Dorsolateral prefrontal cortex (tissue), 120 donors: ENCODE measurements at regions of chr7 and their contacts with region 1.

Region 1: GRCh38 chr7:123154231-123154860 is 45.4 kb downstream of the SLC13A1 start:
- DNase-seq: peak in 9 of 10 donors; percentile 53 to 89 (median 70)
- H3K4me3 ChIP-seq: no peak overlapping the region
- H3K27ac ChIP-seq: peak overlapping the region in 1 of 59 donors; percentile 33
- H3K27me3 ChIP-seq: no peaks in the 10 kb centered on the region
- CTCF ChIP-seq: peak; percentile 74 to 95 (median 87)

Region 2: GRCh38 chr7:122225874-122226273 is 928.5 kb before region 1 on chr7:
- intact Hi-C with region 1: loop called in 1 of 2 experiments (anchors 10 kb)
- DNase-seq: no peak
- H3K4me3 ChIP-seq: no peak overlapping the region
- H3K27ac ChIP-seq: no peak overlapping the region
- H3K27me3 ChIP-seq: peaks cover 0 to 14% (median 0%) of the 10 kb centered on the region in 45 donors
- CTCF ChIP-seq: no peak

Region 3: GRCh38 chr7:122803323-122803722 is 351.0 kb before region 1 on chr7:
- intact Hi-C with region 1: loop called (anchors 10 kb)
- DNase-seq: peak in 3 of 10 donors; percentile 28 to 51 (median 30)
- H3K4me3 ChIP-seq: peak overlapping the region in 3 of 59 donors; percentile 2 to 27 (median 4)
- H3K27ac ChIP-seq: peak overlapping the region in 50 of 59 donors; percentile 7 to 84 (median 62)
- H3K27me3 ChIP-seq: no peaks in the 10 kb centered on the region
- CTCF ChIP-seq: peak; percentile 43 to 76 (median 66)

Region 4: DNA sequence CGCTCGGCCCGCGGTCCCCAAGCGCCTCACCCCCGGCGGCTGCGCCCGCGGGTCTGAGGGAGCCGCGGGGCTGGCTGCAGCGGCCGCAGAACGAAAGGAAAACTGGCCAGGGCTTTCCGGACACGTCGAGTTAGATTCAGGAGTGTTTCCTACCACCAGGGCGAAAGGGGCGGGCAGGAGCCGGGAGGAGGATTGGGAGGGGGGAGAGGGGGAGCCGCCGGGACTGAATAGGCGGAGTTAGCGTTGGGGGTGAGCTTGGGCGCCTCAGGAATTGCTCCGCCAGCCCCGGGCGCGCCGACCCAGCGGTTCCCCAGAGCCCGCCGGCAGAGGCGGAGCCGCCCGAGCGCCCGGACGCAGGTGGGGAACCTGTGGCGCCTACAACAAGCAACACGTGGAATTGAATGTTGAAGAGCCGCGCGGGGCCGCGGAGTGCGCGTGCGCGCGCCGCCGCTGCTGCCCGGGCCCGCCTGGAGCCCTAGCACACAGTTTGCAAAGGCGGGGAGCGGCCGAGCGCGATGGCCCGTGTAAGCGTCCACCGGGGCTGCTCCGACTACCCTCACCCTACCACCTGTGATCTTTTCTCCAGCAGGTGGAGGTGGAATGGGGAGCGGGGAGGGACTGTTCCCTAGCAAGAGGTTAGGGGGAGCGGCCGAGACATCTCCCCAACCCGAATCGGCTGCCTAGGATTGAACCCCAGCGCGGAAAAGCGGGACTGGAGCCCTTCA is 267.8 kb before region 1 on chr7 and contains the start of gene CADPS2:
- intact Hi-C with region 1: loop called in 1 of 2 experiments (anchors 5 kb)
- DNase-seq: peak; percentile 40 to 80 (median 67)
- H3K4me3 ChIP-seq: peak within 1 kb of the TSS; percentile 53 to 94 (median 80)
- H3K27ac ChIP-seq: peak within 1 kb of the TSS in 58 of 59 donors; percentile 14 to 95 (median 84)
- H3K27me3 ChIP-seq: no peaks in the 10 kb centered on the region
- CTCF ChIP-seq: peak in 14 of 56 donors; percentile 9 to 28 (median 15)
- total RNA-seq, gene CADPS2: 30.5 to 144 (median 86.3) TPM